AG04450 (cell line): ENCODE measurements at regions of chr17 and their contacts with region 1.

Region 1: GRCh38 chr17:80101011-80101945 is at the start of gene GAA:
- DNase-seq: no peak
- H3K4me3 ChIP-seq: peak within 1 kb of the TSS; percentile 98
- H3K27ac ChIP-seq: no peak within 1 kb of the TSS
- H3K27me3 ChIP-seq: no peaks in the 10 kb centered on the region
- CTCF ChIP-seq: peak; percentile 56
- polyA plus RNA-seq, gene GAA: 3.8 and 6.0 TPM in 2 replicates

Region 2: GRCh38 chr17:80008383-80008840 is 92.9 kb before region 1 on chr17:
- CTCF ChIA-PET with region 1: interaction called, 14 read pairs
- POLR2A ChIA-PET with region 1: no interaction called
- DNase-seq: no peak
- H3K4me3 ChIP-seq: no peak overlapping the region
- H3K27ac ChIP-seq: no peak overlapping the region
- H3K27me3 ChIP-seq: no peaks in the 10 kb centered on the region
- CTCF ChIP-seq: peak; percentile 92

Region 3: DNA sequence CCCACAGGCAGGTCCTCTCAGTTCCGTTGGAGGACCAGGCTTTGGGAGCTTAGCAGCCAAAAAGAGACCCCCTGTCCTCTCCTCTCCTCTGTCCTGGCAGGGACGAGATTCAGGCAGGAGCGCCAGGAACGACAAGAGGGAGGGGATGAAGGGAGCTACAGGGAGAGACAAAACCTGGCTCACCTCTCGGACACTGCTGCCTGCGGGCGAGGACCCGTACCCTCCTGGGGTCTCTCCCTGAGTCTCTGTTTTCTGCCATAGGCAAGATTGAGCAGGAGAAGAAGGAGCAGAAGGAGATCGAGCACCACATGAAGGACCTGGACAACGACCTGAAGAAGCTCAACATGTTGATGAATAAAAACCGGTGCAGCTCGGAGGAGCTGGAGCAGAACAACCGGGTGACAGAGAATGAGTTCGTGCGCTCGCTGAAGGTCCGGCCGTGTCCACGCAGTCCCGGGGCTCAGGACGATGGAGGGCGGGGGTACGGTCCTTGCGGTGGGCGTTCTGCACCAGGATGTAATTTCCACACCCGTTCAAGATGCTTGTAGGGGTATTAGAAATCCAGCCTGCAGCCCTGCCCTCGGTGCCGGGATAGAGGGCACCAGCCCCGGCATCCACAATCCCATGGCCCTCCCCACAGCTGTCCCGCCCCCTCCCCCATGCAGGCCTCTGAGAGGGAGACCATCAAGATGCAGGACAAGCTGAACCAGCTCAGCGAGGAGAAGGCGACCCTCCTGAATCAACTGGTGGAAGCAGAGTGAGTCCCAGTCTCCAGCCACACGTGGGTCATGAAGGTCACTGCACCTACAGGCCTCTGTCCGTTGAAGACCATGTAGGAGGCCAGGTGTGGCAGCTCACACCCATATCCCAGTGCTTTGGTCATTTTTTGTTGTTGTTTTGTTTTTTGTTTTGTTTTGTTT is 13.7 kb before region 1 on chr17:
- CTCF ChIA-PET with region 1: interaction called, 26 read pairs
- POLR2A ChIA-PET with region 1: interaction called, 3 read pairs
- DNase-seq: no peak
- H3K4me3 ChIP-seq: no peak overlapping the region
- H3K27ac ChIP-seq: no peak overlapping the region
- H3K27me3 ChIP-seq: peaks cover 19% of the 10 kb centered on the region
- CTCF ChIP-seq: no peak

Region 4: DNA sequence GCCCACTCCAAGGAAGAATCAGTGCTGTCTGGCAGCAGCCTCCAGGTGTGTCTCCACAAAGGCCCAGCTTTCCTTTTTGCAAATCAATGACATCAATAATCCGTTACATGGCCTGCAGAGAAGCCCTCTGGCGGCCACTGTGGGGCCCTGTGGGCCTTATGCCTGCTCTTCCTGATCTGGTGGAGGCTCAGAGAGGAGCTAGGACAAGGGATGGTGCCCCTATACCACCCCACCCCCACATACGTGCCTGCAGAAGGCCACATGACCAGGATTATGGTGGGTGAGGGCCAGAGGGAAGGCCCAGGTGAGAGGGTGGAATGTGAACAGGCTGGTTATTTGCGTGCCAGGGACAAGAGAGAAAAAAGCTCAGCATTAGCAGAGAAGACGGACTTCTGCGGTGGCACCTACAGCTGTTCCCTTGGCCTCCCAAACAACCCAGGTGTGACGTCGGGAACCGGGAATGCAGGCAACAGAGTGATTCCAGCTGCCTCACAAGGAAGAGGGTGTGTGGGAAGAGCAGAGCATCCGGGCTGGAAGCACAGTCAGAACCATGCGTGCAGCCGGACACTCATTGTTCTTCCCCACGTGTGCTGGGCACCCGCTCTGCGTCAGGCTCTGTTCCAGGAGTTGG is 23.2 kb after region 1 on chr17:
- CTCF ChIA-PET with region 1: interaction called, 14 read pairs
- POLR2A ChIA-PET with region 1: interaction called, 5 read pairs
- DNase-seq: no peak
- H3K4me3 ChIP-seq: no peak overlapping the region
- H3K27ac ChIP-seq: no peak overlapping the region
- H3K27me3 ChIP-seq: peaks cover 3% of the 10 kb centered on the region
- CTCF ChIP-seq: peak; percentile 61

Region 5: DNA sequence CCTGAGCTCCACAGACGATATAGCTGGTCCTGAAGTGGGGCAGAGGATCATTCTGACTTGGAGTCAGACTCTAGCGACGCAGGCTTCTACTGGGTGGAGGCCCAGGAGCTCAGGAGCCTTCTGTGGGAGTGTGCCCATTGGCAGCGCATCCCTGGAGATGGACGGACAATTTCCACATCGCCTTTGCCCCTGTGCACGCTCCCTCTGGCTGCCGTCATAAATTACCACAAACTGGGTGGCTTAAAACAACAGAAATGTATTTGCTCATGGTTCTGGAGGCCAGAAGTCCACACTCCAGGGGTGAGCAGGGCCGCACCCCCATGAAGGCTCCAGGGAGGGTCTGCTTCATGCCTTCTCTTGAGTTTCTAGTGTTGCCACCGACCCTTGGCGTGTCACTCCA is 75.5 kb after region 1 on chr17:
- CTCF ChIA-PET with region 1: interaction called, 14 read pairs
- POLR2A ChIA-PET with region 1: no interaction called
- DNase-seq: no peak
- H3K4me3 ChIP-seq: no peak overlapping the region
- H3K27ac ChIP-seq: no peak overlapping the region
- H3K27me3 ChIP-seq: peaks cover 35% of the 10 kb centered on the region
- CTCF ChIP-seq: no peak